ENCODE measurements at regions of chr2 and their contacts with region 1.

Region 1: DNA sequence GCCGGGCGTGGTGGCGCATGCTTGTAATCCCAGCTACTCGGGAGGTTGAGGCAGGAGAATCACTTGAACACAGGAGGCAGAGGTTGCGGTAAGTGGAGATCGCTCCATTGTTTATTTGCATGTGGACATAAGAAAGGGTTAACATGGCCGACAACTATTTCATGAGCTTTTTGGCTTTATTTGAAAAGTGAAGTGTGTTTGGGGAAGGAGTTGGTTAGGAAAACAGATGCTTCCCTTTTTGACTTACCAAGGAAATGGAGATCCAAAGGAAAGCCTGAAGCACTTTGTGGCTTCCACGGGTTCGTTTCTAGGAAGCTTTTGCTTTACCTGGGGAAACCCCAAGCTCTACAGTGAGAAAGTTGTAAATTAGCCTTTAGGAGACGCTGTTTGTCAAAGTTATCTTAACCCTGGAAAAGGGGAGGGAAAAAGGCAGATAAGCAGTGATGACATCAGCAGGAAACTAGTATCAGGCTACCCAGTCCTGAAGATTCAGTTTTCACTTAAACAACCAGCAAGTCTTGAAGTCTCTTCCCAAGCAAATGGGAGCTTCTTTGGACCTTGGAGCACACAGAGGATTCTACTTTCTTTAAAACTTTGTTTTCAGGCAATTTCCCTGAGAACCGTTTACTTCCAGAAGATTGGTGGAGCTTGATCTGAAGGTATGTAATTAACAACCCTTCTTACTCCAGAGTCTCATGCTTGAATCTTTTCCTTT is at the start of gene CASP10:
- DNase-seq: peak; percentile 49 to 75
- H3K4me3 ChIP-seq: peak within 1 kb of the TSS; percentile 55
- H3K4me3 Mint-ChIP-seq: peak within 1 kb of the TSS; percentile 81
- H3K27ac Mint-ChIP-seq: peak within 1 kb of the TSS; percentile 92
- H3K4me1 ChIP-seq: peaks cover 4% of the 10 kb centered on the region; the same call in 1 of the 2 replicates
- H3K4me1 Mint-ChIP-seq: peaks cover 13% of the 10 kb centered on the region
- H3K27me3 ChIP-seq: no peaks in the 10 kb centered on the region
- H3K27me3 Mint-ChIP-seq: no peaks in the 10 kb centered on the region
- CTCF ChIP-seq: peak in 1 of 2 experiments; percentile 72
- total RNA-seq, gene CASP10: 5.8 and 5.9 TPM in 2 replicates

Region 2: GRCh38 chr2:201130524-201131186 is 52.2 kb before region 1 on chr2:
- CTCF ChIA-PET with region 1: no interaction called
- POLR2A ChIA-PET with region 1: no interaction called
- intact Hi-C with region 1: no loop called
- DNase-seq: no peak
- H3K4me3 ChIP-seq: no peak overlapping the region
- H3K4me3 Mint-ChIP-seq: no peak overlapping the region
- H3K27ac Mint-ChIP-seq: no peak overlapping the region
- H3K4me1 ChIP-seq: peaks cover 59% of the 10 kb centered on the region
- H3K4me1 Mint-ChIP-seq: peaks cover 43% of the 10 kb centered on the region
- H3K27me3 ChIP-seq: no peaks in the 10 kb centered on the region
- H3K27me3 Mint-ChIP-seq: no peaks in the 10 kb centered on the region
- CTCF ChIP-seq: no peak

Region 3: GRCh38 chr2:201257956-201258665 is 75.3 kb after region 1 on chr2:
- CTCF ChIA-PET with region 1: no interaction called
- POLR2A ChIA-PET with region 1: interaction called, 4 read pairs
- intact Hi-C with region 1: loop called (anchors 2 kb)
- DNase-seq: peak; percentile 62 to 64
- H3K4me3 ChIP-seq: peak overlapping the region; percentile 44
- H3K4me3 Mint-ChIP-seq: peak overlapping the region; percentile 88
- H3K27ac Mint-ChIP-seq: peak overlapping the region; percentile 93
- H3K4me1 ChIP-seq: peaks cover 8% of the 10 kb centered on the region
- H3K4me1 Mint-ChIP-seq: peaks cover 8% of the 10 kb centered on the region
- H3K27me3 ChIP-seq: no peaks in the 10 kb centered on the region
- H3K27me3 Mint-ChIP-seq: no peaks in the 10 kb centered on the region
- CTCF ChIP-seq: no peak

Region 4: GRCh38 chr2:201363857-201364560 is 181.2 kb after region 1 on chr2:
- CTCF ChIA-PET with region 1: interaction called, 3 read pairs
- POLR2A ChIA-PET with region 1: no interaction called
- intact Hi-C with region 1: loop called (anchors 2 kb)
- DNase-seq: peak in 1 of 2 experiments; percentile 40
- H3K4me3 ChIP-seq: no peak overlapping the region
- H3K4me3 Mint-ChIP-seq: no peak overlapping the region
- H3K27ac Mint-ChIP-seq: no peak overlapping the region
- H3K4me1 ChIP-seq: no peaks in the 10 kb centered on the region
- H3K4me1 Mint-ChIP-seq: no peaks in the 10 kb centered on the region
- H3K27me3 ChIP-seq: no peaks in the 10 kb centered on the region
- H3K27me3 Mint-ChIP-seq: no peaks in the 10 kb centered on the region
- CTCF ChIP-seq: peak; percentile 76 to 78